ENCODE measurements at regions of chr22 and their contacts with region 1.

Region 1: DNA sequence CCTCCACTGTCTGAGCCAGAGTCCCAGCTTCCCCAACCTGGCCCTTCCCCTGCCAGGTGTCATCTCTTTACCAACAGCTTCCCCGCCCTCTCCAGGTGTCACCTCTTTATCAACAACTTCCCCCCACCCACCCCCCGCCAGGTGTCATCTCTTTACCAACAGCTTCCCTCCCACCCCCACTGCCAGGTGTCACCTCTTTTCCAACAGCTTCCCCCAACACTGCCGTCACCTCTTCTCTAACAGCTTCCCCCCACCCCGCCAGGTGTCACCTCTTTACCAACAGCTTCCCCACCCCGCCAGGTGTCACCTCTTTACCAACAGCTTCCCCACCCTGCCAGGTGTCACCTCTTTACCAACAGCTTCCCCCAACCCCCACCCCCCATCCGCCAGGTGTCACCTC is 29.8 kb upstream of the TTLL12 start:
- DNase-seq: no peak
- ATAC-seq: no peak
- H3K4me3 ChIP-seq: no peak overlapping the region
- H3K27ac ChIP-seq: no peak overlapping the region
- H3K4me1 ChIP-seq: no peaks in the 10 kb centered on the region
- H3K27me3 ChIP-seq: peaks cover 29% of the 10 kb centered on the region
- CTCF ChIP-seq: no peak
- POLR2A ChIP-seq: no peak
- RAD21 ChIP-seq: no peak

Region 2: DNA sequence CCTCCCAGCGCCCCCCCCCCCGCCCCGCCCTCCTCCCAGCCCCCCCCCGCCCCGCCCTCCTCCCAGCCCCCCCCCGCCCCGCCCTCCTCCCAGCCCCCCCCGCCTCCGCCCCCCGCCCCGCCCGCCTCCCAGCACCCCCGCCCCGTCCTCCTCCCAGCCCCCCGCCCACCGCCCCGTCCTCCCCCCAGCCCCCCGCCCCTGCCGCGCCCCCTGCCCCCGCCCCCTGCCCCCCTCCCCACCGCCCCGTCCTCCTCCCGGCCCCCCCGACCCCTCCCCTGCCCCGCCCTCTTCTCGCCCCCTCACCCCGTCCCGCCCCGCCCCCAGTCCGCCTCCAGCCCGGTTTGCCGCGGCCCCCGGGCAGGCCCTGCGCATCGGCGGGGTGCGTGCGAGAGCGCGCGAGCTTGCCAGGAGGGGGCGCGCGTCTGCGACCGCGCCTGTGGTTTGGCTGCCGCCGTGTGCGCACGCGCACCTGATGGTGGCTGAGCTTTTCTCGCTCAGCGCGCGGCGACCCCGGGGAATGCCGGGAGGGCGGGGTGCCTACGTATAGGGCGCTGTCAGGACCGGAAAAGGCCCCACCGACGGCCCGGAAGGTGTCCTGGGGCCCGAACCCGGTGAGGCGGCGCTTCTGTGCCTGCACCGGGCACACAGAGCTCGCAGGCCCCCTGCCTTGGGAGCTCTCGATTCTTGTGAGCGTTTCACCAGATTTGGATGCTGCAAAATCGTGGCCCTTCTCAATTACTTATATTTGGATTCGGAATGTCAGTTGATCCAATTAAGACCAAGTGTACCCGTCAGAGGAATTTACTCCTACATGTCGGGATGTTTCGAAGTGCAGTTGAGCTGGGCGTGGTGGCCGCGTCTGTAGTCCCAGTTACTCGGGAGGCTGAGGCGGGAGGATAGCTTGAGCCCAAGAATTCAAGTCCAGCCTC is 29.3 kb before region 1 on chr22:
- CTCF ChIA-PET with region 1: no interaction called
- POLR2A ChIA-PET with region 1: interaction called, 16 read pairs
- dilution Hi-C with region 1: no loop called
- in situ Hi-C with region 1: no loop called
- intact Hi-C with region 1: no loop called
- DNase-seq: peak; percentile 92
- ATAC-seq: peak; percentile 88
- H3K4me3 ChIP-seq: peak overlapping the region; percentile 47
- H3K27ac ChIP-seq: peak overlapping the region; percentile 81
- H3K4me1 ChIP-seq: peaks cover 11% of the 10 kb centered on the region
- H3K27me3 ChIP-seq: peaks cover 3% of the 10 kb centered on the region
- CTCF ChIP-seq: peak; percentile 91
- POLR2A ChIP-seq: peak; percentile 57; the same call in 1 of the 2 replicates
- RAD21 ChIP-seq: peak; percentile 37

Measured in IMR-90 (cell line).